Right ventricle myocardium inferior (tissue), 1 donor: ENCODE measurements at regions of chr2 and their contacts with region 1.

Region 1: GRCh38 chr2:25314514-25315315 is 27.0 kb downstream of the DNMT3A start:
- DNase-seq: no peak
- ATAC-seq: peak; percentile 49

Region 2: DNA sequence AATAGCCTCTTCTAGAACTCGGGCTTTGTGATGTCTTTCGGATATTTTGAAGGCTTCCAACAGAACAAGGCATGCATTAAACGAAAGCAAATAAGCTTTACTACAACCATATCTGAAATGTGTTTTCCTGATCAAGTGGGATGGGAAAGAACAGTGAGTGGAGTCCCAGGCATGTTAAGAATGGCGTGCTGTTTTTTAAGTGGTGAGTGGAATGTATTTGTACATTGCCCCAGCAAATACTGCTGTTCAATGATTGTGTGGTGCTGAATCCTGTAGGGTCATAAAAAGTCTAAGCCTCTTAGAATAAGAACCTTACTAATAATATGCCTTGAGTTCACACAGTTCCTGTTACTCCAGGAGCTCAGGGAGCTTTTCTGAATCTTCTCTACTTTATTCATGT is 198.8 kb before region 1 on chr2:
- intact Hi-C with region 1: no loop called
- DNase-seq: no peak
- ATAC-seq: no peak

Region 3: DNA sequence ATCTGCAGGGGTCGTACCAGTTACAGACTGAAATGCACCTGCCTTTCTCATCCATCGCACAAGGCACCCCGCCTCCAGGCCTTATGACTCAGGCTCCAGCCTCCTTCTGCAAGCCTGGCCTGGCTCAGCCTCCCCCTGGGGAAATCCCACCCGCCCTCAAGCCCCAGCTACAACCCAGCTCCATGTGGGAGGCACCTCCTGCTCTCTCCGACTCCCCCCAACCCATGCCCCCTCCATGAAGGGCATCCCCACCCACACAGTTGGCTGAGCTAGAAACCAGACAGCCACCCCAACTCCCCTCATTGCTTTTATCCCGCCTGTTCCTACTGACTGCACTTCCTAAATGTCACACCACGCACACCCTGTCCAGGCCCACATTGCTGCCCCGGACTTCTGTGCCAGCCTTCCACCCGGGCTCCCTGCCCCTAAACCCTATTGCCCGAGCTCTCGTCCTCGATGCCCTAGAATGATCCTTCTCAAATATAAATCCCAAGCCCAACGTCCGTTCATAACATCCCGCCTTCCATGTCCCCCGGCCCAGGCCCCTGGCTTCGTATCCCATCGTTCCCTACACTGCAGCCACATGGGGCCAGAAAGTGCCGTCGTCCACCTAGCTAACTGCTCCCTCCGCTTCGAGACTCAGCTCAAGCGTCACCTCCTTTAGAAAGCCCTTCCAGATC is 17.1 kb after region 1 on chr2:
- intact Hi-C with region 1: loop called (anchors 2 kb)
- DNase-seq: no peak
- ATAC-seq: no peak